HAP-1 (cell line): ENCODE measurements at regions of chr2 and their contacts with region 1.

Region 1: DNA sequence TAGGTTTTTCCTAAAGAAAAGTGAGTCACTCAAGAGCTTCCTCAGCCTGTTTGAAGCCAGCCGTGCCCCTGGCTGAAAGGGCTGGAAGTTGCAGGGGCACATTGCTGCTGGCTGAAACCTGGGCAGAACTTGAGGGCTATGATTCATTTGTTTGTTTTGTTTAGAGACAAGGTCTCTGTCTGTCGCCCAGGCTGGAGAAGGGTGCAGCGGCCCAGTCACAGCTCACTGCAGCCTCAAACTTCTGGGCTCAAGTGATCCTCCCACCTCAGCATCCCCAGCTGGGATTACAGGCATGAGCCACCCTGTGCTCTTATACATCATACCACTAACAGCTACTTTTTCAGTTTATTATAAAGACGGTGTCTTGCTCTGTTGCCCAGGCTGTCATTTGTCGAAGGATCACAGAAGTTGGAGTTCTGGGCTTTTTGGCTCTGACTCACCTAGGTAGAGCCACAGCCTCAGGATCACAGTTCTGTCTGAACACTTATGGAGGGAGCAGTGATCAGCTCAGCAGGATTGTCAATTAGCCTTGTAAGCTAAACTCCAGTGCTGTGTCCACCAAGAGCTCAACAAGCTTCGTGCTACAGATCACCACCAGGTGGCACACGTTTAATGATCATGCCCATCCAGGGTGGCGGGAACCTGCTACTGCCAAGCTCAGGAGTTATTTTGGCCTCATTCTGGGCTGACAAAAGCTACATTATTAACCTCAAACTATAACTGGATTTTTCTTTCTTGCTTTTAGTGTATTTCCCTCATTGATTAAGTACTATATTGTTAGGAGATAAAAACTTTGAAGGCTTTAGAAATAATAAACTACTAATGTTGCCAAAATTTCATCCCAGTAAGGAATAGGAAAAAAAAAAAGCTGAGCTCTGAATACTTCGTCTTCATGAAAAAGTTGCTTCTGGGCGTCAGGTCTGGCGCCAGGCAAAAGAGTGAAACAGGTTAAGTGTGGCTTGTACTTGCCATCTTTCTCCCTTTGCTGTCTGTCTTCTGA is 57.9 kb downstream of the ARHGEF33 start:
- DNase-seq: peak; percentile 79 to 84
- H3K4me3 ChIP-seq: no peak overlapping the region
- H3K4me1 ChIP-seq: peaks cover 5% of the 10 kb centered on the region
- H3K27me3 ChIP-seq: peaks cover 4% of the 10 kb centered on the region

Region 2: DNA sequence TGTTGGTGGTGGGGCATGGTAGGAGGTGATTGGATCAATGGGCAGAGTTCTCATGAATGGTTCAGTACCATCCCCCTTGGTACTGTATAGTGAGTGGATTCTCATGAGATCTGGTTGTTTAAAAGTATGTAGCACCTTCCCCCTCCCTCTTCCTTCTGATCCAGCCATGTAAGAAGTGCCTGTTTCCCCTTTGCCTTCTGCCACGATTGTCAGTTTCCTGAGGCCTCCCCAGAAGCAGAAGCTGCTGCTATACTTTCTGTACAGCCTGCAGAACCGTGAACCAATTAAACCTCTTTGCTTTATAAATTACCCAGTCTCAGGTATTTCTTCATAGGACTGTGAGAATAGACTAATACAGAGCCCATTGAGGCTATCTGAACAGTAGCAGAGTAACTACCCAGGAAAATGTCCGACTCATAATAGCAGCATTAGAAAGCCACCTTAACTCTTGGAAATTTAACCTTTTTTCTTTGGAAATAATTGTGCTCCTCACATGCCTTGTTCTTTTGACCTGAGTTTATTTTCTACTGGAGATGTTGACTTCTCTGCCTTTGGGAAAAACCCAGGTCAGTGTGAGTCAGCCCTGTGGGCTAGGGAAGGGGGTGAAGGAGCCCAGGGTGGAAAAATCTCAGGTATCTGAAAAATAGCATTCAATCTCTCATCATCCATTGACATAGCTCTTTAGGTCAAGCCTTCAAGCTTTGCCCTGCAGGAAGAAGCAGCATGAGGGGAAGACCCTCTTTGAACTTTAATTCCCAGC is 889.7 kb before region 1 on chr2:
- in situ Hi-C with region 1: no loop called
- DNase-seq: no peak
- H3K4me3 ChIP-seq: no peak overlapping the region
- H3K4me1 ChIP-seq: no peaks in the 10 kb centered on the region
- H3K27me3 ChIP-seq: peaks cover 7% of the 10 kb centered on the region

Region 3: GRCh38 chr2:39227628-39228412 is 280.3 kb after region 1 on chr2:
- in situ Hi-C with region 1: loop called (anchors 5 kb)
- DNase-seq: peak; percentile 73 to 87
- H3K4me3 ChIP-seq: no peak overlapping the region
- H3K4me1 ChIP-seq: peaks cover 21% of the 10 kb centered on the region
- H3K27me3 ChIP-seq: no peaks in the 10 kb centered on the region